ENCODE measurements at regions of chr12 and their contacts with region 1.

Region 1: DNA sequence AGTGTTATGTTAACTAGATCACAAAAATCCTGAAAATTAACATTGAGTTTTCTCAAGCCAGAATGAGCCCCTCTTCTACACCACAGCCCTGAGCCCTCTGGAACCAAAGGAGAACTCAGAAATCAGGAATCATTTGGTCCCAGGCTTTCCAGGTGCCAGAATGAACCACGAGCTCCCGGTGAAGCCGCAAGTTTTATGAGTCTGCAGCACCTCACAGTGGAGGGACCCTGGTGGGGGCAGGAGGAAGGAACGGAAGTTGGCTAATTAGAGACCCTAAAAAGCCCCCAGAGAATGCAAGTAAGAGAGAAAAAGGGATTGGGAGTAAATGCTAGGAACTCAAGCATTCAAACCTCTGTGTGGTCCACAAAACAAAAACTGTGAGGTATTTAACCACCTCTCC is 52.9 kb upstream of the BCL2L14 start:
- DNase-seq: no peak
- ATAC-seq: no peak
- H3K4me3 ChIP-seq: no peak overlapping the region
- H3K27ac ChIP-seq: no peak overlapping the region
- H3K4me1 ChIP-seq: no peaks in the 10 kb centered on the region
- H3K27me3 ChIP-seq: peaks cover 4 to 43% of the 10 kb centered on the region in 2 experiments; a peak in 4 of 5 replicates
- CTCF ChIP-seq: peak; percentile 57
- EP300 ChIP-seq: no peak
- POLR2A ChIP-seq: no peak
- RAD21 ChIP-seq: no peak

Region 2: GRCh38 chr12:11960646-11961045 is 57.2 kb before region 1 on chr12:
- CTCF ChIA-PET with region 1: no interaction called
- POLR2A ChIA-PET with region 1: no interaction called
- in situ Hi-C with region 1: no loop called
- intact Hi-C with region 1: loop called (anchors 2 kb)
- DNase-seq: peak; percentile 4
- ATAC-seq: no peak
- H3K4me3 ChIP-seq: no peak overlapping the region
- H3K27ac ChIP-seq: no peak overlapping the region
- H3K4me1 ChIP-seq: peaks cover 23% of the 10 kb centered on the region
- H3K27me3 ChIP-seq: peaks cover 3 to 17% of the 10 kb centered on the region in 2 experiments; a peak in 1 of 5 replicates
- CTCF ChIP-seq: no peak
- EP300 ChIP-seq: no peak
- POLR2A ChIP-seq: no peak
- RAD21 ChIP-seq: no peak